Sigmoid colon (tissue), 7 donors: ENCODE measurements at regions of chr11 and their contacts with region 1.

Region 1: GRCh38 chr11:43278193-43278956 is 33.4 kb upstream of the API5 start:
- DNase-seq: no peak
- H3K4me3 ChIP-seq: no peak overlapping the region
- H3K27ac ChIP-seq: no peak overlapping the region
- H3K4me1 ChIP-seq: peaks cover 0 to 5% (median 0%) of the 10 kb centered on the region in 4 donors
- H3K27me3 ChIP-seq: peaks cover 0 to 24% (median 0%) of the 10 kb centered on the region in 3 donors
- CTCF ChIP-seq: peak in 1 of 4 experiments; percentile 30
- EP300 ChIP-seq: no peak
- POLR2A ChIP-seq: no peak

Region 2: DNA sequence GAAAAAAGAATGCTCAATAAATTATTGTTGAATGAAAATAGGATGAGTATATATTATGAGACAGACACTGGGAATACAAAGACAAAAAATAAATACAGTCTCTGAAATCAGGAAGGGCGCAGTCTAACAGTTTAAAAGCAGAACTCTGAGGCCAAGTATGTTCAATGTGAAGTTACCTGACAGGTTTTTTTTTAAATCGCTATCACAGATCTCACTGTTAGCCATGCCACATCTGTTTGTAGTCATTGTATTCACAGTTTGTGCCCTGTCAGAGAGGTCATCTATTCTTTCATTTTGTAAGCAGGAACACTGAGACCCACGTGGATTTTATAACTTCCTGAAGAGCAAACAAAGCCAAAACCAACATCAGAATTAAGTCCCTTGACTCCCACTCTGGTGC is 511.5 kb before region 1 on chr11:
- intact Hi-C with region 1: loop called (anchors 5 kb)
- DNase-seq: no peak
- H3K4me3 ChIP-seq: no peak overlapping the region
- H3K27ac ChIP-seq: no peak overlapping the region
- H3K4me1 ChIP-seq: no peaks in the 10 kb centered on the region
- H3K27me3 ChIP-seq: no peaks in the 10 kb centered on the region
- CTCF ChIP-seq: no peak
- EP300 ChIP-seq: no peak
- POLR2A ChIP-seq: no peak

Region 3: GRCh38 chr11:43298397-43298796 is 20.0 kb after region 1 on chr11:
- intact Hi-C with region 1: no loop called
- DNase-seq: no peak
- H3K4me3 ChIP-seq: no peak overlapping the region
- H3K27ac ChIP-seq: no peak overlapping the region
- H3K4me1 ChIP-seq: no peaks in the 10 kb centered on the region
- H3K27me3 ChIP-seq: peaks cover 0 to 7% (median 0%) of the 10 kb centered on the region in 3 donors
- CTCF ChIP-seq: no peak
- EP300 ChIP-seq: no peak
- POLR2A ChIP-seq: no peak